Naive thymus-derived CD4-positive, alpha-beta T cell (primary cell): ENCODE measurements at regions of chrX and their contacts with region 1.

Region 1: DNA sequence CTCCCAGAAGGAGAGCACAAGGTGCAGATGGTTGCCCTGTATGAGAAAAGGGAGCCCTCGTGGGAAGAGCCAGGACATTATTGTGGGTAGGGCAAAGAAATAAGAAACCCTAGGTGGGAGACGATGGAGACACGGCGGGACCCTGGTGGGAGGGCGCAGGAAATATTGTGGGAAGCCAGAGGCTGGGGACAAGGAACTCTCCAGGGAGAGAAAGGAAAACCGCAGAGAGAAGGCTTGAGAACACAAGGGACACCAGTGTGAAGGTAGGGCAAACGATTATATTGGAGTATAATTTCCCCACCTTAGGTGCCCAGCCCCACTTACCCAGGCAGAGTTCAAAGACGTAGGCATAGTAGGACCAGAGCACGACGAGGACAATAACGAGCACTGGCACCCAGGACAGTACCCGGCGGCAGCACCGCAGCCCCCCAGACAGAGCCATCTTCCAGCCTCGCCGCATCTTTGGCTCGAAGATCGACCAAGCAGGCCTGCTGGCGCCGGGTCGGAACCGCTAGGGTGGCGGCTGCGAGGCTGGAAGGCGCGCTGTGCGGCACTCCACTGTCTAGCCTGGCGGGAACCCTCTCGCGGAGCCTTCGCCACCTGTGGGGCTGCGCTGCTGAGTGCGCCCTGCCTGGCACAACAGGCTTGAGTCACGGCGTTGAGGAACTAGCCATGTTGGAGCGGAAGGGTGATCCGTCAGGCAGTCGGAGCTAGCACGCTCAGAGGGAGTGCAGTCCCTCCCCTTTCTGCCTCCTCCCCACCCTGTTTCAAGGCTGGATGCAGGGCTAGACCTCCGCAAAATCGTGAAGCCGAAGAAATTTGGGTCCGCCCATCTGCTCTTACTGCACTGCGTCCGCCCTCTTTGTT is at the start of gene ZDHHC15:
- DNase-seq: peak; percentile 18 to 63 (median 51)
- ATAC-seq: peak; percentile 91
- H3K4me3 ChIP-seq: peak within 1 kb of the TSS; percentile 64
- H3K4me3 Mint-ChIP-seq: peak within 1 kb of the TSS; percentile 70 to 97 (median 90)
- H3K27ac ChIP-seq: peak within 1 kb of the TSS; percentile 66
- H3K27ac Mint-ChIP-seq: peak within 1 kb of the TSS; percentile 15 to 93 (median 90)
- H3K4me1 ChIP-seq: peaks cover 0 to 7% of the 10 kb centered on the region in 2 donors
- H3K4me1 Mint-ChIP-seq: peaks cover 9 to 38% (median 30%) of the 10 kb centered on the region in 7 donors
- H3K27me3 ChIP-seq: no peaks in the 10 kb centered on the region
- H3K27me3 Mint-ChIP-seq: no peaks in the 10 kb centered on the region
- total RNA-seq, gene ZDHHC15: 0.16 to 0.84 (median 0.42) TPM in 4 of 5 experiments, not detected in the other

Region 2: DNA sequence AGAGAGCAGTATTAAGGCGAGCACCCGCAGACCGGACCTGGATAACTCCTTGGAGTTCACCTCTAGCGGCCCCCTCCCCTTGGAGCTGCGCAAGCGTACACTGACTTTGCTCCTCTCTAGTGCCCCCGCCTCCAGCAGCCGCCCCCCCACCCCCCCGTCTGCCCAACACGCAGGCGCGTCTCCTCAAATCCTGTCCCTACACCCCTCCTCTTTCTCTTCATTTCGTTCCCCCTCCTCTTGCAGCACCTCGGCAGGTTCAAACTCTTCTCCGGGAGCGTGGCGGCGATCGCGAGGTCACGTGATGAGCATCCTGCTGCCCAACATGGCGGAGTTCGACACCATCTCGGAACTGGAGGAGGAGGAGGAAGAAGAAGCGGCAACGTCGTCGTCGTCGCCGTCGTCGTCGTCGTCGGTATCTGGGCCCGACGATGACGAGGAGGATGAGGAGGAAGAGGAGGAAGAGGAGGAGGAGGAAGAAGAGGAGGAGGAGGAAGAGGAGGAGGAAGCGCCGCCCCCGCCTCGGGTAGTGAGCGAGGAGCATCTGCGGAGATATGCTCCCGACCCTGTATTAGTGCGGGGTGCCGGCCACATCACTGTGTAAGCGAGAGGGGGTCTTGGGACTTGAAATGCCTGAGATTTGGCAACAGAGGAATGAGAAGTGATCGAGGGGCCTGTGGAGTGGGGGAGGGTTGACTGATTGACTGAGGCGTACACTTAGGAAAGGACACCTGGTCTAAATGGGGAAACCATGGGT is 1959.6 kb before region 1 on chrX and contains the start of gene CHIC1:
- CTCF ChIA-PET with region 1: no interaction called
- POLR2A ChIA-PET with region 1: no interaction called
- intact Hi-C with region 1: loop called in 1 of 2 experiments (anchors 10 kb)
- DNase-seq: peak; percentile 33 to 80 (median 71)
- ATAC-seq: peak; percentile 80
- H3K4me3 ChIP-seq: peak within 1 kb of the TSS; percentile 73
- H3K4me3 Mint-ChIP-seq: peak within 1 kb of the TSS; percentile 91 to 99 (median 96)
- H3K27ac ChIP-seq: peak within 1 kb of the TSS; percentile 81
- H3K27ac Mint-ChIP-seq: peak within 1 kb of the TSS; percentile 96 to 100 (median 98)
- H3K4me1 ChIP-seq: no peaks in the 10 kb centered on the region
- H3K4me1 Mint-ChIP-seq: peaks cover 7 to 26% (median 13%) of the 10 kb centered on the region in 7 donors
- H3K27me3 ChIP-seq: no peaks in the 10 kb centered on the region
- H3K27me3 Mint-ChIP-seq: no peaks in the 10 kb centered on the region
- total RNA-seq, gene CHIC1: 7.8 to 17.3 (median 10.7) TPM

Region 3: GRCh38 chrX:74924449-74925225 is 598.2 kb before region 1 on chrX:
- CTCF ChIA-PET with region 1: no interaction called
- POLR2A ChIA-PET with region 1: no interaction called
- intact Hi-C with region 1: loop called in 1 of 2 experiments (anchors 10 kb)
- DNase-seq: peak in 8 of 9 donors; percentile 10 to 45 (median 30)
- ATAC-seq: peak; percentile 77
- H3K4me3 ChIP-seq: peak overlapping the region; percentile 47
- H3K4me3 Mint-ChIP-seq: peak overlapping the region; percentile 80 to 97 (median 92)
- H3K27ac ChIP-seq: peak overlapping the region; percentile 53
- H3K27ac Mint-ChIP-seq: peak overlapping the region in 7 of 9 donors; percentile 59 to 96 (median 86)
- H3K4me1 ChIP-seq: no peaks in the 10 kb centered on the region
- H3K4me1 Mint-ChIP-seq: peaks cover 4 to 11% (median 7%) of the 10 kb centered on the region in 7 donors
- H3K27me3 ChIP-seq: no peaks in the 10 kb centered on the region
- H3K27me3 Mint-ChIP-seq: peaks cover 0 to 30% (median 7%) of the 10 kb centered on the region in 5 donors

Region 4: GRCh38 chrX:75156021-75156945 is 366.5 kb before region 1 on chrX and contains the start of gene ABCB7:
- CTCF ChIA-PET with region 1: no interaction called
- POLR2A ChIA-PET with region 1: interaction called, 3 read pairs
- intact Hi-C with region 1: loop called in 1 of 2 experiments (anchors 1 kb)
- DNase-seq: peak; percentile 24 to 68 (median 59)
- ATAC-seq: peak; percentile 95
- H3K4me3 ChIP-seq: peak within 1 kb of the TSS; percentile 86
- H3K4me3 Mint-ChIP-seq: peak within 1 kb of the TSS; percentile 87 to 100 (median 95)
- H3K27ac ChIP-seq: peak within 1 kb of the TSS; percentile 75
- H3K27ac Mint-ChIP-seq: peak within 1 kb of the TSS; percentile 92 to 100 (median 96)
- H3K4me1 ChIP-seq: no peaks in the 10 kb centered on the region
- H3K4me1 Mint-ChIP-seq: peaks cover 10 to 63% (median 41%) of the 10 kb centered on the region in 7 donors
- H3K27me3 ChIP-seq: no peaks in the 10 kb centered on the region
- H3K27me3 Mint-ChIP-seq: no peaks in the 10 kb centered on the region
- total RNA-seq, gene ABCB7: 19.4 to 33.0 (median 26.3) TPM

Region 5: DNA sequence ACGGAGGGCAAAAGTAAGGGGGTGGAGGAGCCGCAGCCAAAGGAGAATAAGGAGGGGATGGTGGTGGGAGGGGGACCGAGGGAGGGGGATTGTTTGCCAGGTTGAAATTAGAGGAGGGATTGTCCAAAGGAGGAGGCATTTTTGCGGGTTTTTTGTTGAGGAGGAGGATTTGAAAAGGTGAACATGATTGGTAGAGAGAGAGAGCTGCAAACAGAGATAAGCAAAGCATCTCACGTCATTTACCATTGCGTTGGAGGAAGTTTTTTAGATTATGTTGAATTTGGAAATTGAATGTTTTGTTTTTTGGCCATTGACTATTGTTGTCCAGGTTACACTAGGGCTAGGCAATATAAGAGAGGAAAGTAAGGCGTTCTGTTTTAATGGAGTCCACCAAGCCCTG is 312.2 kb before region 1 on chrX:
- CTCF ChIA-PET with region 1: no interaction called
- POLR2A ChIA-PET with region 1: no interaction called
- intact Hi-C with region 1: no loop called
- DNase-seq: no peak
- ATAC-seq: no peak
- H3K4me3 ChIP-seq: no peak overlapping the region
- H3K4me3 Mint-ChIP-seq: no peak overlapping the region
- H3K27ac ChIP-seq: no peak overlapping the region
- H3K27ac Mint-ChIP-seq: no peak overlapping the region
- H3K4me1 ChIP-seq: no peaks in the 10 kb centered on the region
- H3K4me1 Mint-ChIP-seq: peaks cover 0 to 6% (median 0%) of the 10 kb centered on the region in 7 donors
- H3K27me3 ChIP-seq: no peaks in the 10 kb centered on the region
- H3K27me3 Mint-ChIP-seq: peaks cover 0 to 11% (median 0%) of the 10 kb centered on the region in 5 donors

Region 6: GRCh38 chrX:75483935-75484334 is 38.9 kb before region 1 on chrX:
- CTCF ChIA-PET with region 1: no interaction called
- POLR2A ChIA-PET with region 1: no interaction called
- intact Hi-C with region 1: no loop called
- DNase-seq: no peak
- ATAC-seq: no peak
- H3K4me3 ChIP-seq: no peak overlapping the region
- H3K4me3 Mint-ChIP-seq: no peak overlapping the region
- H3K27ac ChIP-seq: no peak overlapping the region
- H3K27ac Mint-ChIP-seq: no peak overlapping the region
- H3K4me1 ChIP-seq: no peaks in the 10 kb centered on the region
- H3K4me1 Mint-ChIP-seq: no peaks in the 10 kb centered on the region
- H3K27me3 ChIP-seq: no peaks in the 10 kb centered on the region
- H3K27me3 Mint-ChIP-seq: no peaks in the 10 kb centered on the region

Region 7: DNA sequence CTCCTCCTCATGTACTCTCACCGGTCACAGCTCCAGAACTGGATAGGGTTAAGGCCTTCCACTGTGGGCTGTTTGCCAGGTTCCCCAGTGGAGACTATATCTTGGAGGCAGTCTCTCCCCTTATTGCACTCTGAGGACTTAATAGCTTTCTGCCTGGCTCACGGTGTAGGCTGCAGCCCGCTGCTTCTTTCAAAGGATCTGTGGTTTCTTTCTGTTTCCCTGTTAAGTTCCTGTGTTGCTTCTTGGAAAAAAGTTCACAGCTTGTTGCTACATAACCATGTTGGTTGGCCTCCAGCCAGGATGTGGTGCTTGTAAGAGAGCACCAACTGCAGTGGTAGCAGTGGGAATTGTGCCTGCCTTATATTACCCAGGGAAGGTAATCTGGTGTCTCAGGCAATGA is 25.0 kb after region 1 on chrX:
- CTCF ChIA-PET with region 1: no interaction called
- POLR2A ChIA-PET with region 1: no interaction called
- intact Hi-C with region 1: no loop called
- DNase-seq: peak in 1 of 9 donors; percentile 1
- ATAC-seq: no peak
- H3K4me3 ChIP-seq: no peak overlapping the region
- H3K4me3 Mint-ChIP-seq: no peak overlapping the region
- H3K27ac ChIP-seq: no peak overlapping the region
- H3K27ac Mint-ChIP-seq: no peak overlapping the region
- H3K4me1 ChIP-seq: no peaks in the 10 kb centered on the region
- H3K4me1 Mint-ChIP-seq: peaks cover 0 to 11% (median 4%) of the 10 kb centered on the region in 7 donors
- H3K27me3 ChIP-seq: no peaks in the 10 kb centered on the region
- H3K27me3 Mint-ChIP-seq: no peaks in the 10 kb centered on the region

Region 8: DNA sequence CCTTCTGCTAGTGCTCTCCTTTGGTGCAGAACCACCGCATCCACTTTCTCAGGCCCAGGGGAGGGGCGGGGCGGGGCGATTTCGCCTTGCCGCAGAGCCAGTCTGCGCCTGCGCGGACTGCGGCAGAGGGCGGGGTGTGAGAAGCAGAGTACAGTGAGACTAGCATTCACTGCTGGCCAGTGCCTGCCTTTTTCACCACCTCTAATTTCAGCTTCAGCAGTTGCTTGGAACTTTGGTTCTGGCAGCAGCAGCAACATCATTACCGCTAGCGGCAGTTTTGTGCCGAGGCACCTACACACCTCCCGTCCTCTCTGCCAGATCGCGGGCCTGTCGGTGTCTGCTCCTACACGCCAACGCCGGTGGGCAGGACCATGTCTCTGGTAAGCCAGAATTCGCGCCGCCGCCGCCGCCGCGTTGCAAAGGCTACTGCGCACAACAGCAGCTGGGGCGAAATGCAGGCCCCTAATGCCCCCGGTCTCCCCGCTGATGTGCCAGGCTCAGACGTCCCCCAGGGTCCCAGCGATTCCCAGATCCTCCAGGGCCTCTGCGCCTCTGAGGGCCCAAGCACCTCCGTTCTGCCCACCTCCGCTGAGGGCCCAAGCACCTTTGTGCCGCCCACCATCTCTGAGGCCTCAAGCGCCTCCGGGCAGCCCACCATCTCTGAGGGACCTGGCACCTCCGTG is 904.9 kb after region 1 on chrX and contains the start of gene MAGEE1:
- CTCF ChIA-PET with region 1: no interaction called
- POLR2A ChIA-PET with region 1: no interaction called
- intact Hi-C with region 1: loop called in 1 of 2 experiments (anchors 10 kb)
- DNase-seq: peak; percentile 66 to 80 (median 75)
- ATAC-seq: peak; percentile 91
- H3K4me3 ChIP-seq: peak within 1 kb of the TSS; percentile 81
- H3K4me3 Mint-ChIP-seq: peak within 1 kb of the TSS; percentile 85 to 95 (median 91)
- H3K27ac ChIP-seq: peak within 1 kb of the TSS; percentile 89
- H3K27ac Mint-ChIP-seq: peak within 1 kb of the TSS; percentile 86 to 96 (median 92)
- H3K4me1 ChIP-seq: peaks cover 0 to 12% of the 10 kb centered on the region in 2 donors
- H3K4me1 Mint-ChIP-seq: peaks cover 12 to 47% (median 41%) of the 10 kb centered on the region in 7 donors
- H3K27me3 ChIP-seq: no peaks in the 10 kb centered on the region
- H3K27me3 Mint-ChIP-seq: peaks cover 0 to 4% (median 0%) of the 10 kb centered on the region in 5 donors
- total RNA-seq, gene MAGEE1: 2.7 to 11.8 (median 10.7) TPM